ENCODE measurements at regions of chr6 and their contacts with region 1.

Region 1: GRCh38 chr6:166382933-166383801 is at the start of gene MPC1:
- DNase-seq: peak; percentile 98
- ATAC-seq: peak; percentile 96 to 98 (median 96)
- H3K4me3 ChIP-seq: peak within 1 kb of the TSS; percentile 92
- H3K27ac ChIP-seq: peak within 1 kb of the TSS; percentile 94
- H3K4me1 ChIP-seq: peaks cover 25% of the 10 kb centered on the region
- H3K27me3 ChIP-seq: no peaks in the 10 kb centered on the region
- CTCF ChIP-seq: no peak
- total RNA-seq, gene MPC1: 76.2 to 153 (median 108) TPM

Region 2: GRCh38 chr6:166342349-166343149 is 40.6 kb before region 1 on chr6 and contains the start of gene SFT2D1:
- intact Hi-C with region 1: loop called (anchors 5 kb)
- DNase-seq: peak; percentile 90 to 95
- ATAC-seq: peak; percentile 97 to 99 (median 98)
- H3K4me3 ChIP-seq: peak within 1 kb of the TSS; percentile 87
- H3K27ac ChIP-seq: peak within 1 kb of the TSS; percentile 93
- H3K4me1 ChIP-seq: peaks cover 23% of the 10 kb centered on the region
- H3K27me3 ChIP-seq: no peaks in the 10 kb centered on the region
- CTCF ChIP-seq: no peak
- total RNA-seq, gene SFT2D1: 11.6 to 16.4 (median 14.2) TPM

Measured in psoas muscle (tissue), 8 donors.